ENCODE measurements at regions of chr20 and their contacts with region 1.

Region 1: GRCh38 chr20:5222919-5223634 is 93.7 kb downstream of the PROKR2 start:
- DNase-seq: peak; percentile 75
- ATAC-seq: peak; percentile 77
- H3K4me3 Mint-ChIP-seq: no peak overlapping the region
- H3K27ac Mint-ChIP-seq: no peak overlapping the region
- H3K4me1 Mint-ChIP-seq: no peaks in the 10 kb centered on the region
- H3K27me3 Mint-ChIP-seq: no peaks in the 10 kb centered on the region

Region 2: GRCh38 chr20:4406627-4407026 is 816.5 kb before region 1 on chr20:
- CTCF ChIA-PET with region 1: no interaction called
- POLR2A ChIA-PET with region 1: no interaction called
- DNase-seq: no peak
- ATAC-seq: no peak
- H3K4me3 Mint-ChIP-seq: no peak overlapping the region
- H3K27ac Mint-ChIP-seq: no peak overlapping the region
- H3K4me1 Mint-ChIP-seq: no peaks in the 10 kb centered on the region
- H3K27me3 Mint-ChIP-seq: peaks cover 8% of the 10 kb centered on the region

Region 3: DNA sequence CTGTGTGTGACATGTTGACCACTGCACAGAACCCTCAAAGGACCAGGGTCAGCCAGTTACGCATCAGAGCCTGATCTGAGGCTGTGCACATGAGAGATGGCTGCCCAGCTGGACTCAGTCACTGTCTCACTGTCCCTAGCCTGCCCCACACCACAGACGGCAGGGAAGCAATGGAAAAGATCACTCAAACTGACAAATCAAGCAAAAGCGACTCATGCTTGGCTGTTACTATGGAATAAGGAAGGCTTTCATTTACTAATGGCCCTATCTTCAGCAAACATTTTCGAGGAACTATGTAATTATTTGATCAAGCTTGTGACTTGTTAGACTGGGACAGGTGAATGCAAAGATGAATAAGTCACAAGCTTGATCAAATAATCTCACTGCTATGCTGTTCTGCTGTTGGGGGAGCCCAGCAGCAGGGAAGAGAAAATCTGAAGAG is 358.7 kb before region 1 on chr20:
- CTCF ChIA-PET with region 1: no interaction called
- POLR2A ChIA-PET with region 1: no interaction called
- DNase-seq: no peak
- ATAC-seq: no peak
- H3K4me3 Mint-ChIP-seq: no peak overlapping the region
- H3K27ac Mint-ChIP-seq: no peak overlapping the region
- H3K4me1 Mint-ChIP-seq: peaks cover 5% of the 10 kb centered on the region
- H3K27me3 Mint-ChIP-seq: no peaks in the 10 kb centered on the region

Region 4: DNA sequence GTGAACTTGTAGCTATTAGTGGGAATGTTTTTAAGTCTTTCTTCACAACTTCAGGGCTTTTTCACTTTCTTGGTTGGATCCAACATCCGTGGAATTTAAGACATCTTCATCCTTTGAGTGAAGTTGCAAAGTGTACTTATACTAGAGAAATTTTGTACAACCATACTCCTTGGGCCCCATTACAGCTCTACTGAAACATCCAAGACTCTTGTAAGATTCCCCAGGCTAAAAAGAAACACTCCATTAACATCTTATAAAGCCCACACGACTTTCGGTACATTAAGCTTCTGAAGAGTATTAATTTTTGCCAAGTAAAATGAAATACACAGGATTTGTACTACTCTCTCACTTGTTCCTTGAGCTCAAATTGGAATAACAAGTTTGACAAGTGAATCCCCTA is 108.7 kb before region 1 on chr20:
- CTCF ChIA-PET with region 1: interaction called, 15 read pairs
- POLR2A ChIA-PET with region 1: no interaction called
- DNase-seq: no peak
- ATAC-seq: no peak
- H3K4me3 Mint-ChIP-seq: peak overlapping the region; percentile 87
- H3K27ac Mint-ChIP-seq: peak overlapping the region; percentile 90
- H3K4me1 Mint-ChIP-seq: peaks cover 56% of the 10 kb centered on the region
- H3K27me3 Mint-ChIP-seq: no peaks in the 10 kb centered on the region

Region 5: DNA sequence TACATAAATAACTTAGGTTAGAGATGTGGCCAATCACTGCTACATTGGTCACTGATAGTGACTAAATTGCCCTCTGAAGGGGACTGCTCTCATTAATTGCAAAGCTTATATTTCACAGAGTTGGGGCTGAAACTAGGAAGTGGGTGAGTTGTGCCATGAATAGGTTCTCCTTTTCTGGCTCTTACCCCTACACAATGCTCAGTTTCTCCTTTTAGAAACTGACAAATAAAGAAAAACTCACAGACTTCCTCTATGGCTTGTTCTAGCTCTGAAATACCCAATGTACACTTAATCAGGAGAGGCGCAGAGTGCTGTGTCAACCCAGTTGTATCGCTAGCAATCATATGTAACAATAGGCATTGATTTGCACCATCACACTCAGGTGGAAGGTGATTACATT is 134.9 kb after region 1 on chr20:
- CTCF ChIA-PET with region 1: no interaction called
- POLR2A ChIA-PET with region 1: no interaction called
- DNase-seq: no peak
- ATAC-seq: no peak
- H3K4me3 Mint-ChIP-seq: no peak overlapping the region
- H3K27ac Mint-ChIP-seq: no peak overlapping the region
- H3K4me1 Mint-ChIP-seq: no peaks in the 10 kb centered on the region
- H3K27me3 Mint-ChIP-seq: peaks cover 4% of the 10 kb centered on the region

Region 6: GRCh38 chr20:5390720-5391119 is 167.6 kb after region 1 on chr20:
- CTCF ChIA-PET with region 1: no interaction called
- POLR2A ChIA-PET with region 1: no interaction called
- DNase-seq: no peak
- ATAC-seq: no peak
- H3K4me3 Mint-ChIP-seq: no peak overlapping the region
- H3K27ac Mint-ChIP-seq: no peak overlapping the region
- H3K4me1 Mint-ChIP-seq: no peaks in the 10 kb centered on the region
- H3K27me3 Mint-ChIP-seq: peaks cover 27% of the 10 kb centered on the region